Caco-2 (cell line): ENCODE measurements at regions of chr1 and their contacts with region 1.

Region 1: GRCh38 chr1:74712881-74713280 is 20.0 kb downstream of the CRYZ start:
- DNase-seq: peak in 1 of 2 experiments; percentile 47
- H3K4me3 ChIP-seq: no peak overlapping the region
- H3K4me3 Mint-ChIP-seq: no peak overlapping the region
- H3K27ac Mint-ChIP-seq: no peak overlapping the region
- H3K4me1 ChIP-seq: no peaks in the 10 kb centered on the region; the same call in 1 of the 2 replicates
- H3K4me1 Mint-ChIP-seq: no peaks in the 10 kb centered on the region
- H3K27me3 ChIP-seq: no peaks in the 10 kb centered on the region
- H3K27me3 Mint-ChIP-seq: no peaks in the 10 kb centered on the region
- CTCF ChIP-seq: no peak

Region 2: GRCh38 chr1:74733604-74734484 is 21.0 kb after region 1 on chr1:
- CTCF ChIA-PET with region 1: interaction called, 6 read pairs
- POLR2A ChIA-PET with region 1: interaction called, 5 read pairs
- intact Hi-C with region 1: loop called (anchors 1 kb)
- DNase-seq: peak in 1 of 2 experiments; percentile 57
- H3K4me3 ChIP-seq: peak overlapping the region; percentile 63
- H3K4me3 Mint-ChIP-seq: peak overlapping the region; percentile 83
- H3K27ac Mint-ChIP-seq: peak overlapping the region; percentile 94
- H3K4me1 ChIP-seq: peaks cover 15% of the 10 kb centered on the region; the same call in 1 of the 2 replicates
- H3K4me1 Mint-ChIP-seq: no peaks in the 10 kb centered on the region
- H3K27me3 ChIP-seq: no peaks in the 10 kb centered on the region
- H3K27me3 Mint-ChIP-seq: no peaks in the 10 kb centered on the region
- CTCF ChIP-seq: peak; percentile 51 to 57